Calu3 (cell line): ENCODE measurements at regions of chr18 and their contacts with region 1.

Region 1: DNA sequence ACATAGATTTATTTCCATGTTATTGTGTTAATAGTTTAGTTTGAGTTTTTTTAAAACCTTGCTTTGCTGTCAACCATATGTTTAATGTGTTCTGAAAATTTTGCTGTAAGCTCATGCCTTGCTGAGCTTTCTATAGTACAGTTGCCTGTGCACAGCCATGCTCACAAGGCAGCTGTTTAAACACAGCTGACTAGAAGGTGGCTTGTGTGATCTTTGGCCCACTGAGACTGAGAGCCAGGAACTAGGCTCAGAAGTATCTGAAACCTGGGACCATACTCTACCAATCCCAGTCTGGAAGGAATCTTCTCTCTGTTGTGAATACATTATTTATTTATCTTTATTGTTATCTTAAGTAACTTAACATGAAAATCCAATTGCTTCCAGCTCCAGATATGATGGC is 350.5 kb downstream of the KIAA1328 start:
- DNase-seq: no peak
- H3K4me3 Mint-ChIP-seq: no peak overlapping the region
- H3K27ac Mint-ChIP-seq: no peak overlapping the region
- H3K4me1 Mint-ChIP-seq: peaks cover 39% of the 10 kb centered on the region
- H3K27me3 Mint-ChIP-seq: no peaks in the 10 kb centered on the region
- CTCF ChIP-seq: no peak

Region 2: GRCh38 chr18:36628435-36629137 is 550.8 kb before region 1 on chr18:
- CTCF ChIA-PET with region 1: no interaction called
- intact Hi-C with region 1: no loop called
- DNase-seq: no peak
- H3K4me3 Mint-ChIP-seq: no peak overlapping the region
- H3K27ac Mint-ChIP-seq: no peak overlapping the region
- H3K4me1 Mint-ChIP-seq: no peaks in the 10 kb centered on the region
- H3K27me3 Mint-ChIP-seq: peaks cover 9% of the 10 kb centered on the region
- CTCF ChIP-seq: no peak

Region 3: GRCh38 chr18:36814994-36815393 is 364.4 kb before region 1 on chr18:
- CTCF ChIA-PET with region 1: no interaction called
- intact Hi-C with region 1: no loop called
- DNase-seq: no peak
- H3K4me3 Mint-ChIP-seq: no peak overlapping the region
- H3K27ac Mint-ChIP-seq: no peak overlapping the region
- H3K4me1 Mint-ChIP-seq: no peaks in the 10 kb centered on the region
- H3K27me3 Mint-ChIP-seq: no peaks in the 10 kb centered on the region
- CTCF ChIP-seq: no peak

Region 4: GRCh38 chr18:36917907-36918306 is 261.5 kb before region 1 on chr18:
- CTCF ChIA-PET with region 1: interaction called, 10 read pairs
- intact Hi-C with region 1: no loop called
- DNase-seq: no peak
- H3K4me3 Mint-ChIP-seq: no peak overlapping the region
- H3K27ac Mint-ChIP-seq: no peak overlapping the region
- H3K4me1 Mint-ChIP-seq: no peaks in the 10 kb centered on the region
- H3K27me3 Mint-ChIP-seq: no peaks in the 10 kb centered on the region
- CTCF ChIP-seq: no peak

Region 5: DNA sequence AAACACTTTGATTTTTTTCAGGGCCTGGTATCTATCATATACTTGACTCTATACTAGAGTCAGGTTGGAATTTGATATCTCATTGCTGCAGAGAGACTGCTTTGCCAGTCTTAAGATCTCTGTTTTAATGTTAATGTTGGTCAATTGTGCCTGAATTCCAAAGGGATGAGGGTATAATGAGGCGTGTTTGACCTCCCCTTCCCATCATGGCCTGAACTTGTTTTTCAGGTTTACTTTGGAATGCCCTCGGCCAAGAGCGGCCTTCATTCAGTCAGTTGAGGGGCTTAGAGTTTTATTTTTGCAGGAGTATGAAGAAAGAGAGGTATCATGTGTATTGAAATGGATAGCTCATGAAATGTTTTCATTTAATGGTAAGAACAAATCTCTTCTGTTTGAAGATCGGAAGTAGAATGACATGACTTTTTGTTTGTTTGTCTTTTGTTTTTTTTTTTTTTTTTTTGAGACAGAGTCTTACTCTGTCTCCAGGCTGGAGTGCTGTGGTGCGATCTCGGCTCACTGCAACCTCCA is 231.5 kb before region 1 on chr18:
- CTCF ChIA-PET with region 1: no interaction called
- intact Hi-C with region 1: loop called (anchors 5 kb)
- DNase-seq: peak; percentile 39
- H3K4me3 Mint-ChIP-seq: peak overlapping the region; percentile 54
- H3K27ac Mint-ChIP-seq: peak overlapping the region; percentile 75
- H3K4me1 Mint-ChIP-seq: peaks cover 21% of the 10 kb centered on the region
- H3K27me3 Mint-ChIP-seq: no peaks in the 10 kb centered on the region
- CTCF ChIP-seq: no peak

Region 6: GRCh38 chr18:37019157-37019827 is 160.1 kb before region 1 on chr18:
- CTCF ChIA-PET with region 1: no interaction called
- intact Hi-C with region 1: loop called (anchors 5 kb)
- DNase-seq: peak; percentile 44
- H3K4me3 Mint-ChIP-seq: no peak overlapping the region
- H3K27ac Mint-ChIP-seq: no peak overlapping the region
- H3K4me1 Mint-ChIP-seq: no peaks in the 10 kb centered on the region
- H3K27me3 Mint-ChIP-seq: no peaks in the 10 kb centered on the region
- CTCF ChIP-seq: peak; percentile 67

Region 7: GRCh38 chr18:37160038-37160820 is 19.2 kb before region 1 on chr18:
- CTCF ChIA-PET with region 1: no interaction called
- intact Hi-C with region 1: loop called (anchors 2 kb)
- DNase-seq: no peak
- H3K4me3 Mint-ChIP-seq: no peak overlapping the region
- H3K27ac Mint-ChIP-seq: no peak overlapping the region
- H3K4me1 Mint-ChIP-seq: peaks cover 17% of the 10 kb centered on the region
- H3K27me3 Mint-ChIP-seq: no peaks in the 10 kb centered on the region
- CTCF ChIP-seq: no peak

Region 8: DNA sequence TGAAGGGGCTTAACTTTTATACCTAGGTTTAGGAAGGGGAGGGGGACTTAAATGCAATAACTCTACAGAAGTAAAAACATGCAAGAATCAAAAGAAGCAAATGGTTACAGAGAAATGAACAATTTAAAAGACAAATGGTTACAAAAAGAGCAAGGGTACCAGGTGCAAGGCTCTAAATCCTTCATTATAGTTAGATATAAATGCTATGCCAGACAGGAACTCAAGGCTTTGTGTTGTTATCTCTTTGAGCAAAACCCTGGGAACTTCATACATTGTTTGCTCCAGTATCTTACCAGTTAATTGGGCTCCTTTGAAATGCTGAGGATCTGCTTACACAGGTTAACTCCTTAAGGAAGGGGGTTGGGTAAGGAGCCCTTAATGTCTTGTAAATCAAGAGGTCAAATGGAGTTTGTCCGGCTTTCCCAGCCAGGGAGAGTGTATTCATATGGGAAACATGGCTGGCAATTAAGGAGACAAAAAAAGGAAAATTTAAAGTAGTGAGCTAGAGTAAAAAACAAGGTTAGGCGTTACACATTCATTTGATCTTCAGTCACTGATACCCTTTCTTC is 38.7 kb after region 1 on chr18:
- CTCF ChIA-PET with region 1: no interaction called
- intact Hi-C with region 1: no loop called
- DNase-seq: no peak
- H3K4me3 Mint-ChIP-seq: no peak overlapping the region
- H3K27ac Mint-ChIP-seq: no peak overlapping the region
- H3K4me1 Mint-ChIP-seq: no peaks in the 10 kb centered on the region
- H3K27me3 Mint-ChIP-seq: no peaks in the 10 kb centered on the region
- CTCF ChIP-seq: no peak

Region 9: DNA sequence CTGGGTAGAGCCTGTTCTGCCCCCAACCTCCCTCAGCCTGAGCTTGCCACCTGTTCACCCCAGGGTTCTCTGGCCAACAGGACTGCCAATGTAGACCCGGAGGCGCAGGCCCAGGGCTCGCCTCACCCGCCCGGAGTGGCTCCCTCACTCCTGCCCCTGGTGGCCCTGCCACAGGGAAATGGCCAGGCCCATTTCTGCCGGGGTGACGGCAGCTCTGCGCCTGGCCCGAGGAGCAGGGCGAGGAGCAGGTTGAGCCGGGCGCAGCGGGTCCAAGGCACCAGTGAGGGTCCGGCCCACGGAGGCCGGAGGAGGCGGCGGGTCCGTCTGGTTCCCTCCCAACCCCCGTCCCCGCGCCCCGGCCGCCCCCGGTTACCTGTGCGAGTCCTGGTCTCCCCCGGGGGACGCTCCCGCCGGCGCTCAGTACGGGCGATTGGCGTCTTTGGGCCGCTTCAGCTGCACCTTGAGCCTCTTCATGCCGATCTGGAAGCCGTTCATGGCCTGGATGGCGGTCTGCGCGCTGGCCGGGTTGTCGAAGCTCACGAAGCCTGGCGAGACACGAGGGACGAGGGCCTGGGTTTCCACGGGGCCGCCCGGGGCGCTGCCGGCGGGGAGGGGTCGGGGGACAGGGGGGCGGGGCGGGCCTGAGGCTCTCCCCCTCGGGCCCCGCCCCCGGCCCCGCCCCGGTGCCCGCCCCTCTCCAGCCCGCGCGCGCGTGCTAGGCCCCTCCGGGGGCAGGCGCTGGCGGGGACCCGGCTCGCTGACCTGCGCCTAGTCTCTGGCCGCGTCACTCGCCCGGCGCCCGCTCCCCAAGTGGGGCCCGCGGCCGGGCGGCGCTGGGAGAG is 74.2 kb after region 1 on chr18:
- CTCF ChIA-PET with region 1: no interaction called
- intact Hi-C with region 1: loop called (anchors 5 kb)
- DNase-seq: peak; percentile 69
- H3K4me3 Mint-ChIP-seq: peak overlapping the region; percentile 74
- H3K27ac Mint-ChIP-seq: no peak overlapping the region
- H3K4me1 Mint-ChIP-seq: peaks cover 42% of the 10 kb centered on the region
- H3K27me3 Mint-ChIP-seq: peaks cover 24% of the 10 kb centered on the region
- CTCF ChIP-seq: no peak